ENCODE measurements at regions of chr3 and their contacts with region 1.

Region 1: GRCh38 chr3:146160964-146161662 is at the start of gene PLOD2:
- DNase-seq: peak; percentile 75
- H3K4me3 Mint-ChIP-seq: peak within 1 kb of the TSS; percentile 86
- H3K27ac Mint-ChIP-seq: peak within 1 kb of the TSS; percentile 86
- H3K4me1 Mint-ChIP-seq: peaks cover 44% of the 10 kb centered on the region
- H3K27me3 Mint-ChIP-seq: no peaks in the 10 kb centered on the region
- CTCF ChIP-seq: no peak
- total RNA-seq, gene PLOD2: 109 and 149 TPM in 2 replicates

Region 2: DNA sequence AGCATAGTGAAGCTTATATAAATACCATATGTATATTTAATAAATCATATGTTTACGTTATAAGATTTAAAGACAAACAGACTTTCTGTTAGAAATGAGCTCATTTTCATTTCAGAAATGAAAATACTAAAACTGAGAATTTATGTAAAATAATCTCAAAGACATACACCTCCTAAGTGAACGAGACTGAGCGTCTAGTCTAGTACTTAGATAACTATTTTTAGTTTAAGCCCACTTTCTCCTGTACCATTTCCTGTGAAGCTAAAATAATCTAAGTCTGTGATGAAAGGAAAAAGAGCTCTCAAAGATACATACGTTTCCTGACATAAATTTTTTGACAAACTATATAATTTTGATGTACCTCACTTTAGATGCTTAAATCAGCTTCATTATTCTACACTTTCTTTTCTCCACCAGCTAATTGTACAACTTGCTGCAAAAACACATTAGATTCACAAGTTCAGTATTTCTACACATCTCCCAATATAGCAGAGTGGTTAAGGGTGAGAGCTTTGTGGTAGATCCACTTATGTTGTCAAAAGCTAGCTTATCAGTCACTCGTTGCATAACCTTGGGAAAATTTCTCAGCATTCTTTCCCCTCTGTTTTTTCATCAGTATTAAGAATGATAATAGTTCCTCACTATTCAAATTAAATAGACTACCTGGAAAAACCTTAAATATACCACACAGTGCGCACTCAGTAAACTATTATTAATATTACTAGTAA is 703.1 kb before region 1 on chr3:
- CTCF ChIA-PET with region 1: no interaction called
- POLR2A ChIA-PET with region 1: no interaction called
- intact Hi-C with region 1: no loop called
- DNase-seq: no peak
- H3K4me3 Mint-ChIP-seq: no peak overlapping the region
- H3K27ac Mint-ChIP-seq: no peak overlapping the region
- H3K4me1 Mint-ChIP-seq: no peaks in the 10 kb centered on the region
- H3K27me3 Mint-ChIP-seq: no peaks in the 10 kb centered on the region
- CTCF ChIP-seq: no peak

Region 3: DNA sequence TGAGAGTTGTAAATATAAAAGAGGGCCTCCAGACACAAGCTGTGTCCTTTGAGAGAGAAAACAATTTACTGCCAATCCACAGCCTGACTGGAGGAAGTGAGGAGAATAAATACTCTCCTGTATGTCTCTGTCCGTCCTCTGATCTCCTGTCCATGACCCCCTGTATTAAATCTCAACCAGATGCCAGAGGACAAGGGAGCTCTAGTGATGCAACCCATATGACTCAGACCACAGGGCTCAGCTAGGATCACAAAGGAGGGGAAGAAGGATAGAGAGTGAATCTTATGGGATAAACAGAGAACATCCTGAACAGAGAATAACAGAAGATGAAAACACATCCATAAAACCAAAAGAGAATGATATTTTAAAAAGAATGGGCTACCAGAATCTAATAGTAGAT is 482.7 kb before region 1 on chr3:
- CTCF ChIA-PET with region 1: no interaction called
- POLR2A ChIA-PET with region 1: no interaction called
- intact Hi-C with region 1: no loop called
- DNase-seq: peak; percentile 39
- H3K4me3 Mint-ChIP-seq: no peak overlapping the region
- H3K27ac Mint-ChIP-seq: no peak overlapping the region
- H3K4me1 Mint-ChIP-seq: peaks cover 7% of the 10 kb centered on the region
- H3K27me3 Mint-ChIP-seq: no peaks in the 10 kb centered on the region
- CTCF ChIP-seq: no peak

Region 4: DNA sequence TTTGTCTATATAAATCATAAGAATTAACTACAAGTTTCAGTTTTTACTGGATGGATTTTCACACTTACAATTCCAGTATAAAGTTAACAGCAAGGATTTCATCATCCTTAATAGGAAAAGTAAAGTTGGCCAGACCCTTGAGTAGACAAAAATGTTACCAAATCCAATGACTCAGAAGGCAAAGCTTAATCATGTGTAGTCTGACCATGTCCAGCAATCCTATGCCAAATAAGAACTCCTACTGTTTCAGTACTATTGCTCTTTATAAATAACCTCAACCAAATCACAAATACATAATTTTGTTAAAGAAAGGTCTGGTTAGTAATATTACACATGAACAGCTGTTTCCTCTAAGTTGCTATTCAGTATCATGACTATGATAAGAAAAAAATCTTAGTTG is 35.2 kb before region 1 on chr3:
- CTCF ChIA-PET with region 1: interaction called, 8 read pairs
- POLR2A ChIA-PET with region 1: interaction called, 11 read pairs
- intact Hi-C with region 1: loop called (anchors 5 kb)
- DNase-seq: peak; percentile 92
- H3K4me3 Mint-ChIP-seq: no peak overlapping the region
- H3K27ac Mint-ChIP-seq: peak overlapping the region; percentile 55
- H3K4me1 Mint-ChIP-seq: peaks cover 50% of the 10 kb centered on the region
- H3K27me3 Mint-ChIP-seq: no peaks in the 10 kb centered on the region
- CTCF ChIP-seq: no peak

Region 5: DNA sequence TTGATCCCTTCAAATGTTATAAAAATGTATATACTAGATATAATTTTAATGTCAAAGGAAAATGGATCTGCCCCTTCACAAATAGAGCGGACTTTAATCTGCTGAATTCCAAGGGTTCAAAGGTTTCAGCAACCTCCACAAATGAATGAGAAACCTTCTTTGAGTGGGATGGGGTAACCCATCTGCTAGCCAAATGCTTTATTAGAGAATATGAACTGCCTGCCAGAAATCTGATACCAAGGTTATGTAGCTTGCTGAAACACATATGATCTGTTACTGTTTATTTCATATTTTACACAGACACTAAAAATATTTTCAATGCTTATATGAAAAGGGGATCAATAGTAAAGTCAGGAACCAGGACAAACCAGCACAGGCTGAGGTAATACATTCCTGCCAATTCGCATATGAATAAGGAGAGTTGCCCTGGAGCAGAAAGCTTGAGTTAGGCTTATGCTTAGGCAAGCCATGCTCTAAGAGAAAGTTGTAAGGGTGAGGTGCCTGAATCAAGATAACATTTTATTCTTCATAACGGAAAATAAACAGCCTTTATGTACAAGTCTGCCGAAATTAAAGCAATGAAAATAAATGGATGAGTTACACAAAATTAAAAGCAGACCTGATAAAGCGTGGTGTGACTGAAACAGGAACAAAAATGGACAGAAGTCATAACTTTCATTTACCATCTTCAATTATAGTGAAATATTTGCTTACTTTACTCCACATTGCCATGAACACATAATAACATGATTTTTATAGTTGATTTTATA is 26.6 kb before region 1 on chr3:
- CTCF ChIA-PET with region 1: interaction called, 3 read pairs
- POLR2A ChIA-PET with region 1: interaction called, 16 read pairs
- intact Hi-C with region 1: loop called (anchors 5 kb)
- DNase-seq: peak; percentile 49
- H3K4me3 Mint-ChIP-seq: no peak overlapping the region
- H3K27ac Mint-ChIP-seq: no peak overlapping the region
- H3K4me1 Mint-ChIP-seq: peaks cover 36% of the 10 kb centered on the region
- H3K27me3 Mint-ChIP-seq: no peaks in the 10 kb centered on the region
- CTCF ChIP-seq: no peak

Region 6: GRCh38 chr3:146142757-146143156 is 18.4 kb before region 1 on chr3:
- CTCF ChIA-PET with region 1: interaction called, 12 read pairs
- POLR2A ChIA-PET with region 1: interaction called, 36 read pairs
- intact Hi-C with region 1: no loop called
- DNase-seq: peak; percentile 42
- H3K4me3 Mint-ChIP-seq: no peak overlapping the region
- H3K27ac Mint-ChIP-seq: no peak overlapping the region
- H3K4me1 Mint-ChIP-seq: peaks cover 37% of the 10 kb centered on the region
- H3K27me3 Mint-ChIP-seq: no peaks in the 10 kb centered on the region
- CTCF ChIP-seq: no peak

Region 7: DNA sequence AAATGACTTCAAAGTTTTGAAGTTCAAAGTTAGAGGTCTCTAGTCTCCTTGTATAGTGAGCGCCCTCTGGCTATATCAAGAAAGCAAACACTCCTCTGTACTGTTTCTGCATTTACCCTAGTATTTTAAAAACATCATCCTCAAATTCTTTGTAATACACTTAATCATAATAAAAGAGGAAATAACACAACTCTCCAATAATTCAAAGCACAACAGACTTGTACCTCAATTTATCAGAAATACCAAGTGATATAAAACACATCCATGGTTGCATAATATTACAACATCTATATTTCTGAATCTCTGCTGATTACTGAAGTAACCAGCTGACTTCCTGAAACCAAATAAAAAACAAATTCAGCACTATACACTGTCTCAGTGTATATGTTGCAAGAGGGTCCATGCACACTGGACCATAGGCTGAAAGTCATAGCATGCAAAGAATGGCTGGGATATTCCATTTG is 12.6 kb before region 1 on chr3:
- CTCF ChIA-PET with region 1: interaction called, 4 read pairs
- POLR2A ChIA-PET with region 1: interaction called, 36 read pairs
- intact Hi-C with region 1: no loop called
- DNase-seq: peak; percentile 47
- H3K4me3 Mint-ChIP-seq: no peak overlapping the region
- H3K27ac Mint-ChIP-seq: peak overlapping the region; percentile 47
- H3K4me1 Mint-ChIP-seq: peaks cover 48% of the 10 kb centered on the region
- H3K27me3 Mint-ChIP-seq: no peaks in the 10 kb centered on the region
- CTCF ChIP-seq: no peak

Region 8: DNA sequence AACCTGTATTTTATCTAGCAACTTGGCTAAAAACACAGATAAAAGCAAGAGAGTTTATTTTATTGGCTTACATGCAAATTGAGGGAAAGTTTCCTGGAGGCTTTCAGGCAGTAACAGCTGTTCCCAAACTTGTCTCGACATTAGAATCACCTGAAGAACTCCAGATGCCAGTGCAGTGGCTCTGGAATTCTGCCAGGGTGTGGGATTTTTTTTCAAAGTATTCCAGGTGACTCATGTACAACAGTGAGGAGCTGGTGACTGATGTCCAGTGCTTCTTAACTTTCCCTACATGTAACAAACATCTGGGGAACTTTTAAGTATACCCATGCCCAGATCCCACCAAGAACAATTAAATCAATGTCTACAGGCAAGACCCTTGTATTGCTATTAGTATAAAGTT is 23.5 kb after region 1 on chr3:
- CTCF ChIA-PET with region 1: interaction called, 45 read pairs
- POLR2A ChIA-PET with region 1: interaction called, 26 read pairs
- intact Hi-C with region 1: loop called (anchors 1 kb)
- DNase-seq: peak; percentile 86
- H3K4me3 Mint-ChIP-seq: no peak overlapping the region
- H3K27ac Mint-ChIP-seq: no peak overlapping the region
- H3K4me1 Mint-ChIP-seq: peaks cover 33% of the 10 kb centered on the region
- H3K27me3 Mint-ChIP-seq: no peaks in the 10 kb centered on the region
- CTCF ChIP-seq: no peak

Region 9: GRCh38 chr3:146772211-146772743 is 611.2 kb after region 1 on chr3:
- CTCF ChIA-PET with region 1: no interaction called
- POLR2A ChIA-PET with region 1: no interaction called
- intact Hi-C with region 1: no loop called
- DNase-seq: no peak
- H3K4me3 Mint-ChIP-seq: no peak overlapping the region
- H3K27ac Mint-ChIP-seq: no peak overlapping the region
- H3K4me1 Mint-ChIP-seq: no peaks in the 10 kb centered on the region
- H3K27me3 Mint-ChIP-seq: peaks cover 15% of the 10 kb centered on the region
- CTCF ChIP-seq: no peak

Region 10: DNA sequence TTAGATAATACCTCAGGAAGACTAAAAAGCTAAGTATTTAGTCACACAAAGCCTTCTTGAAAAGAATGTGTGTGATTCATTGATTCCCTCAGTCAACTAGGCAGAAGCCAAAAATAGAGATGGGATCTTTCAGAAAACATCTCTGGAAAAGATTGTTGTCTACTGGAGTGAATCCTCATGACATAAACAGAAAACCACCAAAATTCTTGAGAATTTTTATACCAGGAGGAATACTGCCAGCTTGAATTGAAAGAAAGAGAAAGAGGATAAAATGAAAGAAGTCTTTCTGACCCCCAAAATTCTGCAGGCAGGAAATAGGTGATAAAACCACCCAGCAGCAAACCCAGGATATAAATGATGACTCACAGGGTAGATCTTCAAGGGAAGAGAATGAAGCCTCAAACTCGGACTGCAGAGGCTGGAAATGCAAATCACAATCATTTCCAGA is 807.1 kb after region 1 on chr3:
- CTCF ChIA-PET with region 1: no interaction called
- POLR2A ChIA-PET with region 1: no interaction called
- intact Hi-C with region 1: no loop called
- DNase-seq: peak; percentile 21
- H3K4me3 Mint-ChIP-seq: no peak overlapping the region
- H3K27ac Mint-ChIP-seq: peak overlapping the region; percentile 71
- H3K4me1 Mint-ChIP-seq: peaks cover 20% of the 10 kb centered on the region
- H3K27me3 Mint-ChIP-seq: peaks cover 10% of the 10 kb centered on the region
- CTCF ChIP-seq: no peak